ENCODE measurements at regions of chr3 and their contacts with region 1.

Region 1: DNA sequence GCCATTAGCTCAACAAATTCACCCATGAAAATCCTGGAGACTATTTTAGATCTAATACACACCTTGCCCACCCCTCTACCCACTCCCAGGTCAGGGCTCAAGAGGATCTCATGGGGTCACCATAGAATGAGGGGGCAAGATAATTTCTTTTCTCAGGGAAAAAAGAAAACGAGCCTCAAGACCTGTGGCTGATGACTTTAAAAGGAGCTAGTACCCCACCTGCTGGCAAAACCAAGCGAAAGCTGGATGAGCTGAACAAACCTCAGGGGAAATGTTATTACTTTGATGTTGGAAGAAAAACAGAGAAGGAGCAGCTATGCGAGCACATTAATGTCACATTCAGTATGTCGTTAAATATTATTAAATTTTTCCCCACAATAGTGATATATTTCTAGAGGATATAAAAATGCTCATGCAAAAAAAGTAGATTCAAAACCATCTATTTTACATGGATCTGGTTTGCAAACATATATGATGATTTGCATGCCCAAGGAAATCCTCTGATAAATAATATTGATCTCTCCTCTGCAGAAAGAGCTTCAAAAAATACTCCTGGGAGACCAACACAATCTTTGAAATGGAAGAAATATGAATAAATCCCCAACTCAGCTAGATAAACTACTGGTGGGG is 37.7 kb downstream of the PLD1 start:
- DNase-seq: peak; percentile 22 to 68
- ATAC-seq: peak in 4 of 8 donors; percentile 27 to 54 (median 44)
- H3K4me3 ChIP-seq: no peak overlapping the region
- H3K27ac ChIP-seq: peak overlapping the region in 2 of 10 donors; percentile 80 to 83
- H3K4me1 ChIP-seq: peaks cover 0 to 50% (median 23%) of the 10 kb centered on the region in 9 donors
- H3K27me3 ChIP-seq: no peaks in the 10 kb centered on the region
- CTCF ChIP-seq: peak; percentile 28 to 79 (median 73)

Region 2: DNA sequence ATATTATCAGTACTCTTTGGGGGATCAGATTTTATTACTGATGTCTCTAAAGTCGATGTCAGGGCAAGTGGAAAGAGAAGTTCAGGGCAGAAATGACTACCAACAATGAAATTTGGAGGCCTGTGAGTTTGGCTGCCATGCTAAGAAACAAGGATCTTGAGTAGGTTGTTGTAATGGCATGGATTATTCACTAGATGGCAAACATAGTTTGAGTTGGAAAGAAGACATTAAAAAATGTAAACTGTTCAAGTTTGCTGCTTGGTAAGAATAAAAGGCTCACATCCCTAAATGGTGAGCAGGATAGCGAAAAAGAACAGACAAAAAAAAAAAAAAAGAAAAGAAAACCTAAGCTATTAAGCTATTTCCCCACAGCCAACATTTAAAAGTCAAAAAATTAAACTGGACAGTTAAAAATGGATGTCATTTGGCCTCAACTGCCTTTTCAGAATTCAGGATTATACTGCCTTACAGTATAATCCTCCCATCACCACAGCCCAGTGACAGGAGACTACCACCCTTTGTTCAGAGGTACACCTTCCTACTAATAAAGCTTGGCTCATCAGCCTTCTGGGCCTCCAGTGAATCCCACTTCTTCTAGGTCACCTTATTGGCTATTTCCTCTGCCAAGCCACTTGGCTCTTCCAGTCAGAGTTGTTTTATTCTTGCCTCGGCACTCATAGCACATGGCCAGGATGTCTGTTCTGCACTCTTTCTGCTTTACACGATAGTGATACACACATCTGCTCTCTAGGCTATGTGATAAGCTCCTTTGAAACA is 126.0 kb before region 1 on chr3:
- intact Hi-C with region 1: loop called in 9 of 10 experiments (anchors 1 to 10 kb)
- DNase-seq: peak in 1 of 2 donors; percentile 57
- ATAC-seq: peak; percentile 57 to 88 (median 80)
- H3K4me3 ChIP-seq: no peak overlapping the region
- H3K27ac ChIP-seq: peak overlapping the region in 9 of 10 donors; percentile 37 to 82 (median 66)
- H3K4me1 ChIP-seq: peaks cover 0 to 65% (median 29%) of the 10 kb centered on the region in 9 donors
- H3K27me3 ChIP-seq: no peaks in the 10 kb centered on the region
- CTCF ChIP-seq: peak; percentile 40 to 76 (median 65)

Region 3: GRCh38 chr3:171690281-171690680 is 82.3 kb before region 1 on chr3:
- intact Hi-C with region 1: loop called in 1 of 10 experiments (anchors 10 kb)
- DNase-seq: no peak
- ATAC-seq: no peak
- H3K4me3 ChIP-seq: no peak overlapping the region
- H3K27ac ChIP-seq: peak overlapping the region in 1 of 10 donors; percentile 61
- H3K4me1 ChIP-seq: peaks cover 0 to 41% (median 22%) of the 10 kb centered on the region in 9 donors
- H3K27me3 ChIP-seq: no peaks in the 10 kb centered on the region
- CTCF ChIP-seq: no peak

Region 4: DNA sequence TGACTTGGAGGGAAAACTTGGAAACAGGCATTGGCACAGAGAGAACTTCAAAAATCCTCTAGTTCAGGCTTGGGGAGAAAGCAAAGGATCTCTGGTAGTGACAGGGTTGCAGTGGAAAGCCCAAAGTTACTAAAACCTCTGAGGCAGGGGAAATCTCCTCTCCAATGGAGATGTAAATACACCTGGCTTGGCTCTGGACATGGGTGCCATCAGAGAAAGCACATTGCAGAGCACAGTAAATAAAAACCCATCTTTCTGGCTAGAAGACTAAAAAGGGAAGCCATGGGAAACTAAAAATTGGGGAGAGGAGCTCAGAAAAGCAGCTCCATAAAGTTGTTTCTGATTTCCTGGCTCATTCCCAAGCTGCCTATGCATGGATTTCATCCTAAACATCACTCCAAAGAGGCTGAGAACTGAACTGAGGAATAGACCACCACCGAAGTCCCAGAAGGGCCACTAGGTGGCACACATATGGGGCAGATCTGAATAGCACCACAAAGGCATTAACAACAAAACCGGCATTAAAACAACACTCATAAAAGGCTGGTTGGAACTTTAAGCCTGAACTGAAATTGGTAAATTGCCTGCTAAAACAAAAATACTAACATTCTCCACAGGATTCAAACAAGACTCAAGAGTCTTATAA is 68.7 kb before region 1 on chr3:
- intact Hi-C with region 1: loop called in 4 of 10 experiments (anchors 5 to 10 kb)
- DNase-seq: no peak
- ATAC-seq: peak in 2 of 8 donors; percentile 52 to 53
- H3K4me3 ChIP-seq: no peak overlapping the region
- H3K27ac ChIP-seq: no peak overlapping the region
- H3K4me1 ChIP-seq: peaks cover 0 to 15% (median 4%) of the 10 kb centered on the region in 9 donors
- H3K27me3 ChIP-seq: no peaks in the 10 kb centered on the region
- CTCF ChIP-seq: peak in 7 of 9 donors; percentile 32 to 55 (median 50)

Region 5: GRCh38 chr3:171753665-171754408 is 18.7 kb before region 1 on chr3:
- intact Hi-C with region 1: no loop called
- DNase-seq: no peak
- ATAC-seq: peak in 2 of 8 donors; percentile 31 to 36
- H3K4me3 ChIP-seq: no peak overlapping the region
- H3K27ac ChIP-seq: peak overlapping the region in 8 of 10 donors; percentile 3 to 47 (median 30)
- H3K4me1 ChIP-seq: peaks cover 5 to 93% (median 70%) of the 10 kb centered on the region in 9 donors
- H3K27me3 ChIP-seq: no peaks in the 10 kb centered on the region
- CTCF ChIP-seq: no peak

Region 6: GRCh38 chr3:171809821-171810628 is 37.5 kb after region 1 on chr3 and contains the start of gene PLD1:
- intact Hi-C with region 1: loop called in 1 of 10 experiments (anchors 5 kb)
- DNase-seq: peak; percentile 88 to 90
- ATAC-seq: peak; percentile 85 to 95 (median 88)
- H3K4me3 ChIP-seq: peak within 1 kb of the TSS; percentile 53 to 79 (median 68)
- H3K27ac ChIP-seq: peak within 1 kb of the TSS; percentile 80 to 94 (median 90)
- H3K4me1 ChIP-seq: peaks cover 0 to 73% (median 20%) of the 10 kb centered on the region in 9 donors
- H3K27me3 ChIP-seq: no peaks in the 10 kb centered on the region
- CTCF ChIP-seq: peak in 4 of 9 donors; percentile 13 to 45 (median 34)
- total RNA-seq, gene PLD1: 51.4 to 83.3 (median 67.1) TPM